Mammary epithelial cell (primary cell): ENCODE measurements at regions of chr22 and their contacts with region 1.

Region 1: DNA sequence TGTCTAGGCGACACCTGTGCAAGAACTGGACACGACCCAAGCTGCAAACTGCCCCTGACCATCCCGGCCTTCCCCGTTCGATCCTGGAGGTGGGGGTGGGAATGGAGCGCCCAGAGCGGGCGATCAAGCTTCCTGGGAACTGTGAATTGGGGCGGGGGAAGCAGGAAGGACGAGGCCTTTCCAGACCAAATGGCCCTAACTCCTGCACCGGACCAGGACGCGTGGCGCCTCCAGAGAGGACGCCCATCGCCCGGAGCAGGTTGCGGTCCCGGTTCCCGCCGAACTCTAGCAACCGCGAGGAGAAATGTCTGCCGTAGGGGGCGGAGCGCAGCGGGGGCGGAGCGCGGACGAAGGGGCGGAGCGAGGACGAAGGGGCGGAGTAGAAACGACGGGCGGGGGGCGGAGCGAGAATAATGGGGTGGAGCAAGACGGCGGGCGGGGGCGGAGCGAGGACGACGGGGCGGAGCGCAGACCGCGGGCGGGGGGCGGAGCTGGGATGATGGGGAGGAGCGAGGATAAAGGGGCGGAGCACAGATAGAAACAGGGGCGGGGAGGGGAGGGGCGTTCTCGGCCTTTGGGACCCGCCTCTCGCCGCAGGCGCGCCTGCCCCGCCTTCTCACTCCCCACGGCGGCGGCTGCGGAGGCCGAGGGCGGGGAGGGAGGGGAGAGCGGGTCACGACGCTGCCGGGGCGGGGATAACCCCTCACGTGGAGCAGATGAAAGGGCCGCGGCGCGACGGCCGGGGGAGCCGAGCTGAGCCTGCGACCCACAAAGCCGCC is at the start of gene ZNRF3:
- DNase-seq: peak; percentile 89
- H3K4me3 ChIP-seq: peak within 1 kb of the TSS; percentile 56 to 84 (median 72)
- H3K27ac ChIP-seq: peak within 1 kb of the TSS; percentile 16
- H3K4me1 ChIP-seq: peaks cover 23% of the 10 kb centered on the region
- H3K27me3 ChIP-seq: no peaks in the 10 kb centered on the region
- CTCF ChIP-seq: no peak
- total RNA-seq, gene ZNRF3: 9.5 to 14.5 TPM

Region 2: DNA sequence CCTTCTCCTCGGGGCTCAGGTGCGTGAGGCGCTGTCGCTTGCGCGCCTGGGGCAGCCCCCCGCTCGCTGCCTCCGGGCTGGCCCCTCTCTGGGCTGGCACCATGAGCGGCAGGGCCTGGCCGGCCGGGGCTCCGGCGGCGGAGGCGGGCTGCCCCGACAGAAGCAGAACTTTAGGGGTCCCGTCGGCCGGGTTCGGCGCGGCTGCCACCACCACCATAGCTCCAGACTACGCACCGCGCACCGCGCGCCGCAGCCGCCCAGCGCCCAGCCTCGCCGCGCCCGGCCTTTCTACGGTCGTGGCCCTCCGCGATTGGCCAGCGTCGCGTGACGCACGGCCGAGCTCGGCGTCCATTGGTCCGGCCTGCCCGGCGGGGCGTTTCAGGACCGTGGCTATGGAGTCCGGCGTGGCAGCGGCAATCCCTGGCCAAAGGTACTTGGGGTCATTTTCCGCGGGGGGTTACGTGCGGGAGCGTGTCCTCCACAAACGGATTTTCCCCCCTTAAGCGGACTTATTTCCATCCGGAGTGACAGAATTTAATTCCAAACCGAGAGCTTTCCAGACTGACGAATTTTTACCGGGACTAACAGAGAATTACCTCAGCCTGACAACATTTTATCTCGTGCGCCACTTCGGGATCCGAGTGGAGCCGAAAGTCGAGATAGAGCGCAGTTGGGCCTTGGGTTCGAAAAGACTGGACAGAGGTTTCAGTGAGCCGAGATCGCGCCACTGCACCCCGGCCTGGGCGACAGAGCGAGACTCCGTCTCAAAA is 82.6 kb before region 1 on chr22 and contains the start of gene XBP1:
- CTCF ChIA-PET with region 1: no interaction called
- dilution Hi-C with region 1: no loop called
- in situ Hi-C with region 1: no loop called
- intact Hi-C with region 1: loop called (anchors 10 kb)
- DNase-seq: peak; percentile 95
- H3K4me3 ChIP-seq: peak within 1 kb of the TSS; percentile 67 to 86 (median 72)
- H3K27ac ChIP-seq: peak within 1 kb of the TSS; percentile 98
- H3K4me1 ChIP-seq: peaks cover 10% of the 10 kb centered on the region
- H3K27me3 ChIP-seq: no peaks in the 10 kb centered on the region
- CTCF ChIP-seq: no peak
- total RNA-seq, gene XBP1: 166 to 224 TPM

Region 3: DNA sequence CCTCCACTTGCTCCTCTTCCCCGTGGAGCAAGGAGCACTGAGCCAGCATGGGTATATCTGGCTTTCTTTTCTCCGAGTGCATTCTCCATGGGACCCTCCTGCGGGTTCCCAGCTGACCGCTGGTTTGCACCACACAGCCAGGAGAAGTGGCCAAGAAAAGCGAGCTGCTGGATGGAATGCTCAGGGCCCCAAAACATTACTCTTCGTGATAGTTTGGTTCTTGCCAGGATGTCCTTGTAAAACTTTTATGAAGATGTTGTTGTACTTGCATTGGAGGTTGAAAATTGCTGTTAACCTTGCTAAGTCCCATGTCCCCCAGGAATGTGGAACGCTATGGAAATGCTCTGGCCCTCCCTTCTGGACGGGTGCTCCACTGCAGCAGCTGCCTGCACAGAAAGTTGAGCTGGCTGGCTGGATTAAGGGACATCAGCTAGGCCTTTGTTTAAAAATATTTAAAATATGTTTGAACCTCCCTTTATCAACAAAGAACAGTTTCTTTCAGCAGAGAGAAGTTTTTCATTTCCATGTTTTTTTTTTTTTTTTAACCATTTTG is 69.0 kb after region 1 on chr22:
- CTCF ChIA-PET with region 1: interaction called, 3 read pairs
- dilution Hi-C with region 1: no loop called
- in situ Hi-C with region 1: no loop called
- intact Hi-C with region 1: loop called (anchors 5 kb)
- DNase-seq: no peak
- H3K4me3 ChIP-seq: no peak overlapping the region
- H3K27ac ChIP-seq: no peak overlapping the region
- H3K4me1 ChIP-seq: peaks cover 4% of the 10 kb centered on the region
- H3K27me3 ChIP-seq: no peaks in the 10 kb centered on the region
- CTCF ChIP-seq: no peak

Region 4: GRCh38 chr22:29031227-29032011 is 148.4 kb after region 1 on chr22:
- CTCF ChIA-PET with region 1: no interaction called
- dilution Hi-C with region 1: no loop called
- in situ Hi-C with region 1: no loop called
- intact Hi-C with region 1: loop called (anchors 1 kb)
- DNase-seq: peak; percentile 96
- H3K4me3 ChIP-seq: peak overlapping the region; percentile 45 to 47 (median 45)
- H3K27ac ChIP-seq: peak overlapping the region; percentile 94
- H3K4me1 ChIP-seq: peaks cover 35% of the 10 kb centered on the region
- H3K27me3 ChIP-seq: no peaks in the 10 kb centered on the region
- CTCF ChIP-seq: peak in 1 of 2 donors; percentile 20

Region 5: DNA sequence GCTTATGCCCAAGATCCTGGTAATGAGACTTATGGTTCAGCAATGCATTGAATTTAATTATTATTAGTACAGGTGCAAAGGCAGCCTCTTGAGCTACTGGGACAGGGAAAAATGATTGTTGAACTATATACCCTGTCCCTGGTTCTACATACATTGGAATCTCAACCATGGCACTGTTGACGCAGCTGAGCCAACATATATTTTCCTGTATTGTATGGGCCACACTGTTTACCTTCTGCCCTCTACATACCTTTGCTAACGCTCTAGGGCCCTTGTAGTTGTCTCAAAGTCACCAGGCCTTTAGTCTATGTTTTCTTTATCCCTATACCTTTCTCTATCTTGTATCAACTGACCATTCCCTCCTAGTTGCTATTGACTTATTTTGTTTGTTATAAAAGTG is 212.4 kb after region 1 on chr22:
- CTCF ChIA-PET with region 1: interaction called, 11 read pairs
- dilution Hi-C with region 1: no loop called
- in situ Hi-C with region 1: no loop called
- intact Hi-C with region 1: no loop called
- DNase-seq: no peak
- H3K4me3 ChIP-seq: no peak overlapping the region
- H3K27ac ChIP-seq: no peak overlapping the region
- H3K4me1 ChIP-seq: no peaks in the 10 kb centered on the region
- H3K27me3 ChIP-seq: no peaks in the 10 kb centered on the region
- CTCF ChIP-seq: no peak

Region 6: DNA sequence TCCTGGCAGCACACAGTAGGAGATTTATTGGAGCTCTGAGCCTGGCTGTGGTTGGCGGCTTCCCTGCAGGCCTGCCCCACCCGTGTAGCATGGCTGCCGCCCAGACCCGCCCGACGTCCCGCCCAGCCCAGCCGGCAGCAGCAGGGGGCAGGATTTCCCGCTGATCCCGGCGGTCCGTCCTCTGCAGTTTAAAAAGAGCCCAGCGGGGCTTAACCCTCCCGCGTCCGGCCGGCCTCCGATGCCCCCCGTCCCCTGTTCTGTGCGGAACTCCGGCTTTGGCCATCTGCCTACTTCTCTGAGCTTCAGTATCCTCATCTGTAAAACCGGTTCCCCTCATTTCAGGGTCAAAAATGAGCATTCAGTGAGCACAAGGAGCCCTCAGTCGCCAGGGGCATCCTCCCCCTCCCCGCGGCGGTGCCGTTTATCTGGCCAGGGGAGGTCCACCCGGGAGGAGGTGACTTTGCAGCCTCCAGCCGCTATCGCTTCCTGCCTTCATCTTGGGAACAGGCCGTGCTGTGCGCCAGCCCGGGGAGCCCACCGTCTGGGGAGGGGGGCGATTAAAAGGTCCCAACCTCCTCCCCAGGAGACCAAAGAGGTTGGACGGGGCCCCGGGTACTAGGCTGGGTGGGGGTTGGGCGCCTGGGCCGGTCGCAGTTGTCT is 423.2 kb after region 1 on chr22 and contains the start of gene GAS2L1:
- CTCF ChIA-PET with region 1: interaction called, 20 read pairs
- dilution Hi-C with region 1: no loop called
- in situ Hi-C with region 1: no loop called
- intact Hi-C with region 1: no loop called
- DNase-seq: peak; percentile 70
- H3K4me3 ChIP-seq: peak within 1 kb of the TSS; percentile 57 to 80 (median 73)
- H3K27ac ChIP-seq: peak within 1 kb of the TSS; percentile 57
- H3K4me1 ChIP-seq: peaks cover 41% of the 10 kb centered on the region
- H3K27me3 ChIP-seq: no peaks in the 10 kb centered on the region
- CTCF ChIP-seq: peak; percentile 31 to 67
- total RNA-seq, gene GAS2L1: 15.8 to 29.7 TPM